ENCODE measurements at regions of chr5 and their contacts with region 1.

Region 1: DNA sequence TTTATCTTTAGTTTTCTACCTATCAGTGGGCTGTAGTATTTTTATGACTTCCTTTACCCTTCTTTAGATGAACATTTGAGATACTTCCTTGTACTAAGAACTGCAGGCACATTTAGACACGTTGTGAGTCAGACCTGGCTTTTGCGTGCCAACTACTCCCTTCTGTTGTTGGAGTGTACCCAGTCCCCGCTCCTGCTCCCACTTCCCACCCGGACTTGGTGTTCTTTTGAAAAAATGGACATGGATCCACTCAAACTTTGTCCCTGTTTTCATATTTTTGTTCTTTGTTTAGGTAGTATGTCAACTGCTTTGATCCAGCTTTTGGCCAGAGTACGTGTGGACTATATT is 60.7 kb downstream of the PARP8 start:
- DNase-seq: no peak
- ATAC-seq: peak; percentile 63
- H3K4me3 ChIP-seq: no peak overlapping the region
- H3K4me3 Mint-ChIP-seq: peak overlapping the region in 9 of 10 donors; percentile 27 to 69 (median 58)
- H3K27ac ChIP-seq: no peak overlapping the region
- H3K27ac Mint-ChIP-seq: peak overlapping the region in 8 of 9 donors; percentile 27 to 87 (median 62)
- H3K4me1 ChIP-seq: peaks cover 26 to 38% of the 10 kb centered on the region in 2 donors
- H3K4me1 Mint-ChIP-seq: peaks cover 35 to 88% (median 71%) of the 10 kb centered on the region in 7 donors
- H3K27me3 ChIP-seq: no peaks in the 10 kb centered on the region
- H3K27me3 Mint-ChIP-seq: no peaks in the 10 kb centered on the region

Region 2: GRCh38 chr5:50744776-50745175 is 17.7 kb after region 1 on chr5:
- CTCF ChIA-PET with region 1: interaction called, 7 read pairs
- POLR2A ChIA-PET with region 1: interaction called, 3 read pairs
- intact Hi-C with region 1: loop called in 1 of 2 experiments (anchors 1 kb)
- DNase-seq: peak in 5 of 9 donors; percentile 26 to 48 (median 30)
- ATAC-seq: peak; percentile 65
- H3K4me3 ChIP-seq: peak overlapping the region; percentile 43
- H3K4me3 Mint-ChIP-seq: peak overlapping the region; percentile 82 to 98 (median 88)
- H3K27ac ChIP-seq: peak overlapping the region; percentile 72
- H3K27ac Mint-ChIP-seq: peak overlapping the region; percentile 78 to 98 (median 91)
- H3K4me1 ChIP-seq: peaks cover 39% of the 10 kb centered on the region in 2 donors
- H3K4me1 Mint-ChIP-seq: peaks cover 56 to 95% (median 86%) of the 10 kb centered on the region in 7 donors
- H3K27me3 ChIP-seq: no peaks in the 10 kb centered on the region
- H3K27me3 Mint-ChIP-seq: no peaks in the 10 kb centered on the region

Region 3: GRCh38 chr5:51881901-51882300 is 1154.8 kb after region 1 on chr5:
- CTCF ChIA-PET with region 1: no interaction called
- POLR2A ChIA-PET with region 1: no interaction called
- intact Hi-C with region 1: no loop called
- DNase-seq: no peak
- ATAC-seq: no peak
- H3K4me3 ChIP-seq: no peak overlapping the region
- H3K4me3 Mint-ChIP-seq: no peak overlapping the region
- H3K27ac ChIP-seq: no peak overlapping the region
- H3K27ac Mint-ChIP-seq: no peak overlapping the region
- H3K4me1 ChIP-seq: no peaks in the 10 kb centered on the region
- H3K4me1 Mint-ChIP-seq: no peaks in the 10 kb centered on the region
- H3K27me3 ChIP-seq: no peaks in the 10 kb centered on the region
- H3K27me3 Mint-ChIP-seq: no peaks in the 10 kb centered on the region